ENCODE measurements at regions of chr9 and their contacts with region 1.

Region 1: GRCh38 chr9:93682232-93682968 is 106.0 kb downstream of the PHF2 start:
- DNase-seq: peak; percentile 47 to 91
- H3K4me3 ChIP-seq: no peak overlapping the region
- H3K4me1 ChIP-seq: no peaks in the 10 kb centered on the region
- H3K27me3 ChIP-seq: no peaks in the 10 kb centered on the region

Region 2: GRCh38 chr9:93058355-93059096 is 623.9 kb before region 1 on chr9 and contains the start of gene SUSD3:
- in situ Hi-C with region 1: no loop called
- DNase-seq: peak; percentile 51 to 89
- H3K4me3 ChIP-seq: peak within 1 kb of the TSS; percentile 41
- H3K4me1 ChIP-seq: peaks cover 10% of the 10 kb centered on the region
- H3K27me3 ChIP-seq: no peaks in the 10 kb centered on the region

Region 3: GRCh38 chr9:94002316-94003140 is 320.1 kb after region 1 on chr9:
- in situ Hi-C with region 1: loop called (anchors 5 kb)
- DNase-seq: peak; percentile 49 to 76
- H3K4me3 ChIP-seq: no peak overlapping the region
- H3K4me1 ChIP-seq: no peaks in the 10 kb centered on the region
- H3K27me3 ChIP-seq: 0 out of 2 replicates have a peak, but pooled peaks cover 4% of the 10 kb centered on the region

Region 4: DNA sequence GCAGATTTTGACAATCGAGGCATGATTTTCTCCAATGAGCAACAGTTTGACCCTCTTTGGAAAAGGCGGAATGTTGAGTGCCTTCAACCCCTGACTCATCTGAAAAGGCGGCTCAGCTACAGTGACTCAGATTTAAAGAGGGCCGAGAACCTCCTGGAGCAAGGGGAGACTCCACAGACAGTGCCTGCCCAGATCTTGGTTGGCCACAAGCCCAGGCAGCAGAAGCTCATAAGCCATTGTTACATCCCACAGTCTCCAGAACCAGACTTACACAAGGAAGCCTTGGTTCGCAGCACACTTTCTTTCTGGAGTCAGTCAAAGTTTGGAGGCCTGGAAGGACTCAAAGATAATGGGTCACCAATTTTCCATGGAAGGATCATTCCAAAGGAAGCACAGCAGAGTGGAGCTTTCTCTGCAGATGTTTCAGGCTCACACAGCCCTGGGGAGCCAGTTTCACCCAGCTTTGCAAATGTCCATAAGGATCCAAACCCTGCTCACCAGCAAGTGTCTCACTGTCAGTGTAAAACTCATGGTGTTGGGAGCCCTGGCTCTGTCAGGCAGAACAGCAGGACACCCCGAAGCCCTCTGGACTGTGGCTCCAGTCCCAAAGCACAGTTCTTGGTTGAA is 415.5 kb after region 1 on chr9:
- in situ Hi-C with region 1: no loop called
- DNase-seq: no peak
- H3K4me3 ChIP-seq: no peak overlapping the region
- H3K4me1 ChIP-seq: peaks cover under 1% of the 10 kb centered on the region
- H3K27me3 ChIP-seq: no peaks in the 10 kb centered on the region

Region 5: DNA sequence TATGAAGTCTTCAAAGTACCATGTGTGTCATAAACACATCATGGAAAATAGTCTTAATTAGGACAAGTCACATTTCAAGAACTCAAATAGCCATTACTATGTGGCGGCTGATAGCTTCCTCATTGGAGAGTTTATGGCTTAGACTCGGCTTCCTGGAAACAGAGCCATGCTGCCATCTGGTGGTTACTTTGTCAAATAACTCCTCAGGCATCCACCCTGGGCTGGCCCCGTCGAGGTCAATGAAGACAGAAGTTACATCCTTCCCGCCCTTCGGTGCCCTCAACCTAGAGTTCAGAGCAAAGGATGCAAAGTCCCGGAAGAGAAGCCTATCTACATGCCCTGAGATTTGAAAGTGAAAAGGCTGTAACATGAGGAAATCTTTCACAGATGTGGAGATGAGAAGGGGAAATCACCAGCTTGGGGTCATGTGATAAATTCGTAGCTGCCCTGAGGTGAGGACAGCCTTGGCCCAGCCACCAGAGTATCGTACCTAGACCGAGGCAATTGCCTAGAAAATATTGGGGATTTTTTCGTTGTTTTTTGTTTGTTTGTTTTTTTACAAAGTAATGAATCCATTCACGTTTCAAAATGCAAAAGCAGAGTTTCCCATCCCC is 531.2 kb after region 1 on chr9:
- in situ Hi-C with region 1: loop called (anchors 25 kb)
- DNase-seq: peak; percentile 77 to 78
- H3K4me3 ChIP-seq: no peak overlapping the region
- H3K4me1 ChIP-seq: no peaks in the 10 kb centered on the region
- H3K27me3 ChIP-seq: no peaks in the 10 kb centered on the region

Measured in HAP-1 (cell line).